ENCODE measurements at regions of chr1 and their contacts with region 1.

Region 1: DNA sequence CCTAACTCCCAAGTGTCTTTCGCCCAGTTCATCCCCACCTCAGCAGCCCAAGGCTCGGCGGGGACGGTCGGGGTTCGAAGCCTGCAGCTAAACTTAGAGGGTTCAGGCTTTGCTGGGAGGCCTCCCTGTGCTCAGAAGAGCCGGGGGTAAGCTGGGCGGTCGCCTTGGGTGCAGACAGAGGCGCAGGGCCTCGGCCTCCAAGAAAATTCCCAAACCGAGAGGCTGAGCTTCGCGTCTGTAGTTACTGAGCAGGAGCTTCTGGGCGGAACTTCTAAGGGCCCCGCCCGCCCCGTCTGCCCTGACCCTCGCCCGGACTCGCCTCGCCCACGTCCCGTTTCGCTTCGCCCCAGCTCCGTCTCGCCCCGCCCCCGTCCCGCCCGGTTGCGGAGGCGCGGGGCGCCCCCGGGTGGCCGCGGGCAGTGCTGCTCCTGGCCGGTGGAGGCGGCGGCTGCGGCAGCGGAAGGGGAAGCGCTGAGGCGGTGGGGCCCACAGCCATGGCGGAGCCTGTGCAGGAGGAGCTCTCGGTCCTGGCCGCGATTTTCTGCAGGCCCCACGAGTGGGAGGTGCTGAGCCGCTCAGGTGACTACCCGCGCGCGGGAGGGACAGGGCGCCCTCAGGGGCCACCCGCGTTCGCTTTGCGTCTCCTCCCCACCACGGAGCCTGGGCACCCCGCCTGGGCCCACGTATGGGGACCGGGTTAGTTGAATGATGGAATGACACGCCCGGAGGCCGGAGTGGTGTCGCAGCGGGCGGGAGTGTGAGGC is at the start of gene RWDD3:
- DNase-seq: peak; percentile 91
- H3K4me3 Mint-ChIP-seq: peak within 1 kb of the TSS; percentile 97
- H3K27ac Mint-ChIP-seq: peak within 1 kb of the TSS; percentile 99
- H3K4me1 Mint-ChIP-seq: peaks cover 31% of the 10 kb centered on the region
- H3K27me3 Mint-ChIP-seq: peaks cover 20% of the 10 kb centered on the region
- total RNA-seq, gene RWDD3: 12.9 to 14.2 TPM

Region 2: DNA sequence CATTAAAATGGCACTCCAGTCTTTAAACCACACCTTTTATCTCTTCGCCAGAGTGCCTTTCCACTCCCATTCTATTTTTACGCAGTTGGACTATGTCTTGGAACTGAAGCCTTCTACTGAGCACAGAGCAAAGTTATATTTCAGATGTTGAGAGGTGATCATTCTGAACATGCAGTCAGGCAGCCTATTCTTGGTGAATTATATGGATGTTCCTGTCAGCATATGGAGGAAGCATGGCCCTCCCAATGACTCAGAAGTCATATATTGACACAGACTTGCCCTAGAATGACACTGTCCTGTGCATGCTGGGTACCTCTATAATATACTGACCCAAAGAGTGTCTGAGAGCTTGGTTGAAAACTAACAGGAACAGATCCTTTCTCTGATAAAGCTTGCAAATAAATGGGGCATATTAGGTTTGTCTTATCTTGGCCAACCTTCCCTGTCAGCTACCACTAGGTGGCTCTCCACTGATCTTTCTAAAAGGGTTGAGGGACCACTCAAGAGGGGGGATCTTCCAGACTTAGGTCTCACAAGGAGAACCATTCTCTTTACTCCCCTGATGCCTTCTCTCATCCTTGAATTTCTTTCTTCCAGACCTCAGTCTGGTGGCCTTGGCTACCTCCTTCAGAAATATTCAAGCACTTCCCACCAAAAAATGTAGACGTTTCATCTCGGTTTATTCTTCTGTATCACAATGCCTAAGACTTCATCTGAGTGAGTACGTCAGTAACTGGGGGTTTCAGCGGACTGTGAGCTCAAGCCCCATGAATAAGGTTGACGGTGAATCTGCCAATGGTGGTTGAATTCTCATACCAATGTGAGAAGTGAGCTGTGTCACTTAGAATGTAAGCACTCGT is 149.4 kb before region 1 on chr1:
- CTCF ChIA-PET with region 1: interaction called, 10 read pairs
- POLR2A ChIA-PET with region 1: no interaction called
- DNase-seq: peak; percentile 24
- H3K4me3 Mint-ChIP-seq: no peak overlapping the region
- H3K27ac Mint-ChIP-seq: no peak overlapping the region
- H3K4me1 Mint-ChIP-seq: peaks cover 6% of the 10 kb centered on the region
- H3K27me3 Mint-ChIP-seq: peaks cover 14% of the 10 kb centered on the region

Region 3: GRCh38 chr1:95223110-95223509 is 10.8 kb before region 1 on chr1:
- CTCF ChIA-PET with region 1: interaction called, 20 read pairs
- POLR2A ChIA-PET with region 1: no interaction called
- DNase-seq: no peak
- H3K4me3 Mint-ChIP-seq: no peak overlapping the region
- H3K27ac Mint-ChIP-seq: no peak overlapping the region
- H3K4me1 Mint-ChIP-seq: no peaks in the 10 kb centered on the region
- H3K27me3 Mint-ChIP-seq: peaks cover 4% of the 10 kb centered on the region

Region 4: DNA sequence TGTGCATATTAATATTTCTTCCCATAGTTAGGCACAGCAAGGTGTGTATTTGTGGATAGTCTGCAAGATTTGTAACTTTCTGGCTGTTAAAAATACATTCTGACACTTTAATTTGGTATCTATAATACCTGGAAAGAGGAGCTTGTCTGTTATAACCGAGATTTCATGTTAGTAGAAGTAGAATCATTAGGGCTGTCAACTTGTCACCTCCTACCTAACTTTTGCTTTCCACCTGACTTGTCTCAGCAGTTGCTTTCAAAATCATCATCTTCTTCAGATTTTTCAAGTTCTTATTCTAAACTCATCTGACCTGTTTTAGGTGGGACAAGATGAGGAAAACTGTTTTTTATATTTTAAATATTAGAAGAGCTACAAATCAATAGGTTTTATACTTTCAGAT is 11.1 kb after region 1 on chr1:
- CTCF ChIA-PET with region 1: interaction called, 19 read pairs
- POLR2A ChIA-PET with region 1: interaction called, 3 read pairs
- DNase-seq: no peak
- H3K4me3 Mint-ChIP-seq: no peak overlapping the region
- H3K27ac Mint-ChIP-seq: no peak overlapping the region
- H3K4me1 Mint-ChIP-seq: peaks cover 3% of the 10 kb centered on the region
- H3K27me3 Mint-ChIP-seq: no peaks in the 10 kb centered on the region

Measured in activated CD4-positive, alpha-beta T cell treated with anti-CD3 and anti-CD28 coated beads, Interleukin-2, amount 10 ng/mL, durations not matched to agents 7 days and 5 days (primary cell).